ENCODE measurements at regions of chr17 and their contacts with region 1.

Region 1: GRCh38 chr17:42378597-42379594 is 9.3 kb downstream of the STAT3 start:
- DNase-seq: peak; percentile 73
- H3K4me3 Mint-ChIP-seq: peak overlapping the region; percentile 63
- H3K27ac Mint-ChIP-seq: peak overlapping the region; percentile 95
- H3K4me1 Mint-ChIP-seq: peaks cover 90% of the 10 kb centered on the region
- H3K27me3 Mint-ChIP-seq: no peaks in the 10 kb centered on the region

Region 2: DNA sequence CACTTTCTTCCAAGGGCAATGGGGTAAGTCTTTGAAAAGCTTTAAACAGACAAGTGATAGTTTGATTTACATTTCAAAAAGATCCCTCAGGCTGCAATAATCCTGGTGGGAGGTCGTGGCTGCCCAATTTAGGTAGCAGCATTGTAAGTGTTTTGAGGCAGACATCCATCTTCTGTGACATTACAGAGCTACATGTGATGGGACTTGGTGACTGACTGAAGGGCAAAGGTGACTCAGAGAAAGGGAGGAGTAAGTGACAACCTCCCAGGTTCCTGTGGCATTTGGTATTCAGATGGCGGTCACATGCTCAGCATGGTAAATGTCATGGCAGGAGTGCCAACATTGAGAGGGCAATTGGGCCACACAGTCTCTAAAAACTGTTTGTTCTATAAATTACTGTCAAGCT is 17.1 kb before region 1 on chr17:
- CTCF ChIA-PET with region 1: interaction called, 3 read pairs
- intact Hi-C with region 1: loop called (anchors 2 kb)
- DNase-seq: peak; percentile 70
- H3K4me3 Mint-ChIP-seq: no peak overlapping the region
- H3K27ac Mint-ChIP-seq: peak overlapping the region; percentile 79
- H3K4me1 Mint-ChIP-seq: peaks cover 81% of the 10 kb centered on the region
- H3K27me3 Mint-ChIP-seq: no peaks in the 10 kb centered on the region

Region 3: GRCh38 chr17:42436391-42436790 is 57.5 kb after region 1 on chr17:
- CTCF ChIA-PET with region 1: no interaction called
- intact Hi-C with region 1: no loop called
- DNase-seq: no peak
- H3K4me3 Mint-ChIP-seq: no peak overlapping the region
- H3K27ac Mint-ChIP-seq: no peak overlapping the region
- H3K4me1 Mint-ChIP-seq: no peaks in the 10 kb centered on the region
- H3K27me3 Mint-ChIP-seq: peaks cover 2% of the 10 kb centered on the region